Ascending aorta (tissue), 2 donors: ENCODE measurements at regions of chr1 and their contacts with region 1.

Region 1: DNA sequence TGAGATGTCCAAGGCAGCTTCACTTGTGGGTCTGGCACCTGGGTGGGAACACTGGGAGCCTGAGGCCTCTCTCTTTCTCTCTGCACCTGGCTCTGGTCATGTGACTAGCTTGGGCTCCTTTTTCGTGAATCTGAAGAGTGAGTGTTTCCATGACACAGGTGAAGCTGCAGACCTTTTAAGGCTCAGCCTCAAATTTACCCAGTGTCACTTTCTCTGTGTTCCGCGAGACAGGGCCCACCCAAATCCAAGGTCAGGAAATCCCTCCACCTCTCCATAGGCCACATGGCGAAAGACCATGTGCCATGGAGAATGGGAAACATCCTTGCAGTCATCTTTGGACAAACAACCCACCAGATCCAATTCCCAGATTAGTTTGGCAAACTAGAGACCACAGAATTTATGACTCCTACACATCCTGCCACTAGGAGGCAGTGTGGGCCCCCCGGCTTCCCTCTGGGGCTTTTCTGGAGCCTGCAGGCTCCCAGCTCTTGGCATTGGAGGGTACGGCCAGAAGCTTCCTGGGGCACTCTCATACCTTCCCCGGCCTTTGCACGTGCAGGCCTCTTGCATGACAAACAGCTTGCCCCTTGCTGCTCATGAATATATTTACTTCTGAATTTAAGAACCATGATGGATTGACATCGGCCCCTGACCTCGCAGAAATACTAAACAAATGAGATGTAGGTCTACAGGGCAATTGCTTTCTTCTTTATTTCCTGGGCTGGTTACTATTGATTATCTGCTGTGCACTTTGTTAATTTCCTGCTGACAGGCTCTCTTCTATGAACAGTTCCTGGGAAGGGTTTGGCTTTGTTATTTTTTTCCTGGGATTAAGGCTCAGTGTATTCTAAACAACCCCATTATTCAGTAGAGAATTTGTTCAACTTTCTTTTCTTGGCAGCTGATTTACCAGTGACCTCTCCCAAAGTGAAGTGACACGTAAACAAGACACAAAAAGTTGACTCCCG is 180.7 kb downstream of the KAZN start:
- DNase-seq: no peak
- H3K4me3 ChIP-seq: no peak overlapping the region
- H3K27ac ChIP-seq: no peak overlapping the region
- H3K4me1 ChIP-seq: no peaks in the 10 kb centered on the region
- H3K27me3 ChIP-seq: no peaks in the 10 kb centered on the region
- CTCF ChIP-seq: peak; percentile 31 to 64 (median 56)

Region 2: DNA sequence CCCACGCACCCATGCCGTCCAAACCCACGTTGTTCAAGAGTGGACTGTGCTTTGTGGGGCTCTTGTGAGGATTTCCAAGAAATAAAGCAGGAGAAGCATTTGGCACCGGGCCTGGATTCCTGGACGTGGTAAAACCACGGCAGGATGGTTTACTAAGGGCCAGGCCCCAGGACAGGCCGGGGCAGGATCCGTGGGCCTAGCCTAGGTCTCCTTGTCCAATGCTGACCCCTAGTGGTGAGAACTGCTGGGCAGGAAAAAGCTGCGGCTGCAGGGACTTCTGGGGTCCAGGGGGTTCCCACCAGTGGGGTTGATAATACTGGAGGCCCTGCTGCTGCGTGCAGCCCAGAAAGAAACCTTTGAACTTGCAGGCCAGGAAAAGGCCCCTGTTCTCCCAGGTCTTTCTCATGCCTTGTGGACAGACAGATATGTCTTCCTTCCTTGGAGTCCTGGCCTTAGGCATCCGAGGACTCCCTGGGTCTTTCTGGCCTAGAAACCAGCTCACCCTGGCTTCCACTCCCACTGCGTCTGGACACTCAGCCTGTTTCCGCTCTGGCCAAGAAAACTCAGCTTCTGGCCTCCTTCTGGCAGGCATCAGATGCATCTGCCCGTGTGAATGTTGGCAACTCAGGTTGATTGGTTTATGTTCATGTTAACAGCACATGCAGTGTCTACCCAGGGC is 267.4 kb after region 1 on chr1:
- intact Hi-C with region 1: loop called (anchors 5 kb)
- DNase-seq: peak in 1 of 2 donors; percentile 79
- H3K4me3 ChIP-seq: no peak overlapping the region
- H3K27ac ChIP-seq: no peak overlapping the region
- H3K4me1 ChIP-seq: no peaks in the 10 kb centered on the region
- H3K27me3 ChIP-seq: no peaks in the 10 kb centered on the region
- CTCF ChIP-seq: peak; percentile 73 to 95 (median 84)